Posterior cingulate gyrus (tissue), 11 donors: ENCODE measurements at regions of chr3 and their contacts with region 1.

Region 1: GRCh38 chr3:195259475-195260279 is 11.3 kb downstream of the XXYLT1 start:
- DNase-seq: peak; percentile 59 to 96 (median 78)

Region 2: GRCh38 chr3:194682694-194683310 is 576.9 kb before region 1 on chr3:
- intact Hi-C with region 1: loop called (anchors 1 kb)
- DNase-seq: peak; percentile 54 to 93 (median 70)

Region 3: DNA sequence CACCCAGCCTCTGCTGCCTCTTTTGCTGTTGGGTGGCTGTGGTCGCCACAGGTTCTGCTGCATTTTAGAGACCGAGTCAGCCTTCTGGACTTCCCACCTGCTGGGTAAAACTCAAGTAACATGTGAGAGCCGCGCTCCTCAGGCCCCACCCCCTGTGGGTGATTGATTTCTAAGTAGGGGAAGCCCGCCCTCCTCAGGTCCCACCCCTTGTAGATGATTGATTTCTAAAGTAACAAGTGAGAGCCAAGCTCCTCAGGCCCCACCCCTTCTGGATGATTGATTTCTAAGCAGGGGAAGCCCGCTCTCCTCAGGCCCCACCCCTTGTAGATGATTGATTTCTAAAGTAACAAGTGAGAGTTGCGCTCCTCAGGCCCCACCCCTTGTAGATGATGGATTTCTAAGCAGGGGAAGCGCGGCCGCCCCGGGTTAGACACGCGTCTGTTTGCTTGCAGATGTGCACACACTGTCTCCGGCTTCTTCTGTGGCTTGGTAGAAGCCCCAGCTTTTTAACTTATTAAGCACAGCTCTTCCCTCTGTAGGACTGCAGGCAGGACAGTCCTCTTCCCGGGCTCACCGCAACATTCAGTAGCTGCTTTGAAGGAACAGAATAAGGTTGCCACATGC is 490.5 kb before region 1 on chr3:
- intact Hi-C with region 1: loop called (anchors 10 kb)
- DNase-seq: peak; percentile 78 to 98 (median 85)

Region 4: GRCh38 chr3:194900854-194901522 is 358.7 kb before region 1 on chr3:
- intact Hi-C with region 1: no loop called
- DNase-seq: no peak

Region 5: DNA sequence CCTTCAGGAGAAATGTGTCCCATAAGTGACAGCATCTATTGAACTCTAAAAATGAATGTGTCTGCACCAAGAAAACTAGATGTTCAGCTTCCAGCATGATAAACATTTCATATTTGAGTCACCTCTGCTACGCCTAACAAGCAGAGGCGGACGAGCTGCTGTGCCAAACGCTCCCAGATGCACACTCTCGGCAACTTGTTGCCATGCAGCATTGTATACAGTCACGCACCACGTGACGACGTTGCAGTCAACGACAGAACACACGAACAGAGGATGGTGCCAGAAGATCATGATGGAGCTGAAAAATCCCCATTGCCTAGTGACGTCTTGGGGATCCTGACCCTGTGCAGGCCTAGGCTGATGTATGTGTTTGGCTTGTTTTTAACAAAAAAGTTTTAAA is 126.2 kb before region 1 on chr3:
- intact Hi-C with region 1: loop called (anchors 10 kb)
- DNase-seq: peak in 8 of 10 donors; percentile 25 to 95 (median 60)

Region 6: DNA sequence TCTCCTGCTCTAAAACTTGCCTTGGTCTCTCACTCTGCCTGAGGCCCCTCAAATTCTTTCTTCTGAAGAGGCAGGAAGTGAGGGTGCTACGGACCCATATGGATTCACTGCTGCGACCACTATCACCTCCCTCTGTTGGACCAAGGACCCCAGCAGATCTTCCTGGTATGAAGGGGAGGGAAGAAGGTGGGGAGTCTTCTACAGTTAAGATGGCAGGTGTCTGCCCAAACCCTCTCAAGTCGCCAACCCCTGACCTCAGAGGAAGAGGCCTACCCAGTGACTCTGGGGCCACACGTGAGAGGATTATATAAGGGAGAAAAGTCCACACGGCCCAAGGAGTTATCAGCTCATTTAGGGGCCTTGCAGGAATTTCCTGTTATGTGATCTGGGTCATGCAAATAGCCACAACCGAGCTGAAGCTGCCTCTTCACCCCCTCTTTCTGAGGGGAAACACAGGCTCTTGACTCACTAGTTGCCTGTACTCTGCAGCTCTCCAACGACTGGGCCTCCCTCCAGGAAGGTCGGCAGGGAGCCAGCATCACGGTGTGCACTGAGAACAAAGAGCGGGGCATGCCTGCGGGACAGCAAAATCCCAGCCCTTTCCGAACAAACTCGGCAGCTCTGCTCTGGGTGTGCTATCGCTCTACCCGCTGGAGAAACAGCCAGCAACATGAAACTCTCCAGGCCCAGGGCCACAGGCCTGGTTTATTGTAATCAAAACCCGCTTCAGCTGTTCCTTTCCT is 104.7 kb before region 1 on chr3:
- intact Hi-C with region 1: loop called (anchors 5 kb)
- DNase-seq: peak; percentile 51 to 95 (median 69)